Naive thymus-derived CD8-positive, alpha-beta T cell (primary cell): ENCODE measurements at regions of chr14 and their contacts with region 1.

Region 1: GRCh38 chr14:24108336-24108874 is 6.2 kb upstream of the DCAF11 start:
- DNase-seq: no peak
- ATAC-seq: peak; percentile 31 to 32
- H3K4me3 Mint-ChIP-seq: peak overlapping the region in 8 of 10 donors; percentile 2 to 57 (median 32)
- H3K27ac Mint-ChIP-seq: peak overlapping the region; percentile 83 to 98 (median 94)
- H3K4me1 Mint-ChIP-seq: peaks cover 5 to 24% (median 11%) of the 10 kb centered on the region in 4 donors
- H3K27me3 Mint-ChIP-seq: no peaks in the 10 kb centered on the region

Region 2: DNA sequence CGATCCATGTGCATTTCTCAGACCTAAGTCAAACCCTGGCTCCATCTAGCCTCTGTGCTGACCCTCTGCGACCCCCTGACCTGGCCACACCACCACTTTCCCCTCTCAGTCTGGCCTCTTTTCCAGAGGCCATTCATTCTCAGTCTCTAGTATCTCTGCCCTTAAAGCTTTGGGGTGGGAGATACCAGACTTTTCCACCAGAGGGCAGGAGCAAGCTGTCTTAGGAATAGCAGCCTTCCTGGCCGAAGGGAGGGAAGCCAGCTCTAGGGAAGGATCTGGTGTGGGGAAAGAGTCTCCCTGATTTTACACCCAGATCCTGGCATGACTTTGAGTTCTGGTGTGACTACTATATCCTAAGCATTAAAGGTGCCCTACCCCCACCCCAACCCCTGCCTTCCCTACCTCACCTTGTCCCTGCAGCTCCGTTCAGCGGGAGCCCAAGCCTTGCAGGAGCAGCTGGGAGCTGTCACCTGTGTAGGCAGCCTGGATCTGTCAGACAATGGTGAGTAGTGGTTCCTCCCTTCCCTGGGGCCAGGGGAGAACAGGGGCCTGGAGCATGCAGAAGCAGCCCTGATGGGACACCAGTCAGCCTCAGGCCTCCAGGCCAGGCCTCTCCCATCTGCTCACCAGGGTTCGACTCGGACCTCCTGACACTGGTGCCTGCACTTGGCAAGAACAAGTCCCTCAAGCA is 50.0 kb before region 1 on chr14:
- POLR2A ChIA-PET with region 1: interaction called, 14 read pairs
- DNase-seq: peak in 8 of 10 donors; percentile 27 to 76 (median 56)
- ATAC-seq: peak; percentile 74 to 79
- H3K4me3 Mint-ChIP-seq: no peak overlapping the region
- H3K27ac Mint-ChIP-seq: peak overlapping the region in 2 of 10 donors; percentile 37 to 74
- H3K4me1 Mint-ChIP-seq: peaks cover under 1 to 10% (median 6%) of the 10 kb centered on the region in 4 donors
- H3K27me3 Mint-ChIP-seq: peaks cover under 1 to 22% (median 6%) of the 10 kb centered on the region in 5 donors

Region 3: DNA sequence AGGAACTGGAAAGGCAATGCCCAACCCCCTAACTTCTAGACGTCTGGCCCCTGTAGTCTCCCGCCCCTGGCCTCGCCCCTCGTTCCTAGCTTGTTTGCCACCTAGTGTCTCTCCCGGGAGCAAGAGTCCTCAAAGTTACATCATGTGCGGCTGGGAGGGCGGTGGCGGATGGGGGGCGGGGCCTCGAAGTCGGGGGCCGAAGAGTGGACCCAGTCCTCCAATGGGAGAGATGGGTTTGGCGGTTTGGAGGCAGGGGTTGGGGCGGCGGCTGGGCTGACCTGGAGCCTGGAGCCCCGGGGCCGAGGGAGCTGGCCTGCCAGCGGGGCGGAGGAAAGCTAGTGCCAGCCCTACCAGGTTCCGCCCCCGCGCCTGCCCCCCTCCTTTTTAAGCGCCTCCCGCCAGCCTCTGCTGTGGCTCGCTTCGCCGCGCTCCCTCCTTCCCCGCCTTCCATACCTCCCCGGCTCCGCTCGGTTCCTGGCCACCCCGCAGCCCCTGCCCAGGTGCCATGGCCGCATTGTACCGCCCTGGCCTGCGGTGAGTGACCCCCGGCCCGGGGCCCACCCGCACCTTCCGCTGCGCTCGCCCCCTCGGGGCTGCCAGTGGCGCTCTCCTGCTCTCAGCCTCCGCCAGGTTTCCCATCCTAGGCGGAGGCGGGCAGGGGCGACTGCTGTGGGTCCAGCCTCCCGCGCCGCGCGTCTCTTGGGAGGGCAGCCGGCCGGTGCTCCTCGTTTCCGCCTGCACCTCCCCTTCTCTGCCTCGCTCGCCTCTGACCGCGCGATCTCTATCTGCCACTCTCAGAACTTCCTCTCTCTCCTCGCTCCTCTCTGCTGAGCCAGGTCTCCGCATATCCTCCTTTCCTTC is 14.3 kb before region 1 on chr14 and contains the start of gene PCK2:
- POLR2A ChIA-PET with region 1: interaction called, 44 read pairs
- DNase-seq: peak; percentile 40 to 78 (median 62)
- ATAC-seq: peak; percentile 78 to 83
- H3K4me3 Mint-ChIP-seq: peak within 1 kb of the TSS; percentile 95 to 99 (median 98)
- H3K27ac Mint-ChIP-seq: peak within 1 kb of the TSS; percentile 93 to 99 (median 97)
- H3K4me1 Mint-ChIP-seq: peaks cover 29 to 40% (median 34%) of the 10 kb centered on the region in 4 donors
- H3K27me3 Mint-ChIP-seq: no peaks in the 10 kb centered on the region
- polyA plus RNA-seq, gene PCK2: 8.6 to 11.6 (median 11.3) TPM

Region 4: DNA sequence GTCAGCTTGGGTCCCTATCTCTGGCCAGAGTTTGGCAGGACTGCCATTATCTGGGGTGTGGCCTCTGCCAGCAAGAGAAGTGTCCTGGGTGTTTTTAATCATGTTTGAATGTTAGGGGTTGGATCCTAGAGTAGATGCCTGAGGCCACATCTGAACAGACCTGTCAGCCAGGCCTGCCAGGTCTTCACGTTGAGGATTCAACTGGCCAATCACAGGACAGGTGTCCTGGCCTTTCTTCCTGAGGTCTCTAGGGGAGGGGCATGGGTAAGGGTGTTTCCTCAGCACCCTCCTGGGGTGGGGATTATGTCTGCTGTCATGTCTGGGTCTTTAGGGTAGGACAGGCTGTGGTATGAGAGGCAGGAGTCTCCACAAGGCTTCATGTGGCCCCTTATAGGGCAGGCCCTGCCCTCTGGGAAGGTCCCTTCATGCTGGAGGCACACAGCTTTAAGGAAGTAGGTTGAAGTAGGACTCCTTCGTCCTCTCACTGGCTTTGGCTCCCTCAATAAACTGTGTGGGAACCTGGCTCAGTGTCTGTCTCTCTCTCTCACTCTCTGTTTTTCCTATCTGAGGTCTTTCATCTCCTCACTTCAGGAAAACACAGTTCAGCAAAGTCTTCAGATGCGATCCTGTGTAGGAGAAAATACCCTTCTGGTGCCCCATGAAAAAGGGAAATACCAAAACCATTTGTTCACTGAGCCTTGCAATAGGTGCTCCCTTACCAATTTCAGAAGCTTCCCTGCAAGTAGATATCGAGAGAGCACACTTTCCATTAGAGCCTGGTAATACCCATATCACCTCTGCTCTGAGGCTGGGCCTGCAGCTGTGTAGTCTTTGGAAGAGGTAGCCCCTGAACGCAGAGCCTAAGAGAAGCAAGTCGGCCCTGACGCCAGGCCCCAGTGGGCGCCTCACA is 15.4 kb after region 1 on chr14:
- POLR2A ChIA-PET with region 1: no interaction called
- DNase-seq: no peak
- ATAC-seq: no peak
- H3K4me3 Mint-ChIP-seq: no peak overlapping the region
- H3K27ac Mint-ChIP-seq: peak overlapping the region in 4 of 10 donors; percentile 19 to 71 (median 44)
- H3K4me1 Mint-ChIP-seq: peaks cover 1 to 15% (median 3%) of the 10 kb centered on the region in 4 donors
- H3K27me3 Mint-ChIP-seq: no peaks in the 10 kb centered on the region

Region 5: DNA sequence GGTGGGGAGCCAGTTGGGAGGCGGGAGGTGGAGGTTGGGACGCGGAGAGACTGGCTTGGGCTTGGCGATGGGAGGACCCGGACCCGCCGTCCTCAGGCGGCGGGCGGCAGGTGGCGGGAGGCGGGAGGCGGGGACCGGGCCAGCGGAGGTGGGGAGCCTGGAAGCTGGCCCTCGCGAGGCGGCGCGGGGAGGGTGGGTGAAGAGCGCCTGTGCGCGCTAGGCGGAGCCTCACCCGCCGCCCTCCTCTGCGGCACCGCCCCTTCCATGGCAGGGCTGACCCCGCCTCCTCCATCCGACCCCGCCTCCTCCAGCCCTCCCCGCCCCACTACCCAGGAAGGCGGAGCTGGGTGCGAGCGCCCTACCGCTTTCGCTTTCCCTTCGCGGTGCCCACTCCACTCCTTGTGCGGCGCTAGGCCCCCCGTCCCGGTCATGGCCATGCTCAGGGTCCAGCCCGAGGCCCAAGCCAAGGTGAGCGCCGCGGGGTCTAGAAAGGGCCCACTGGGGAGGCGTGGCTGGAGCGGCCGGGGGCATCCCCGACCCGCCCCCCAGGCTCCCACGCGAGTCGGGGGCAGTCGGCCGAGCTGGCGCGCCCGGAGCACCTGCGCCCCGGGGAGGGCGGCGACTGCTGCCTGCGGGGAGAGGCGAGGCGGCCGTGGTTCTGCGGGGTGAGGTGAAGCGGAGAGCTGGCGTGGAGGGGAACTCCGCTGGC is 27.6 kb after region 1 on chr14 and contains the start of gene PSME1:
- POLR2A ChIA-PET with region 1: interaction called, 177 read pairs
- DNase-seq: peak; percentile 88 to 96 (median 94)
- ATAC-seq: peak; percentile 88 to 94
- H3K4me3 Mint-ChIP-seq: peak within 1 kb of the TSS; percentile 87 to 98 (median 93)
- H3K27ac Mint-ChIP-seq: peak within 1 kb of the TSS; percentile 86 to 97 (median 94)
- H3K4me1 Mint-ChIP-seq: peaks cover 34 to 69% (median 66%) of the 10 kb centered on the region in 4 donors
- H3K27me3 Mint-ChIP-seq: no peaks in the 10 kb centered on the region
- polyA plus RNA-seq, gene PSME1: 681 to 767 (median 753) TPM

Region 6: DNA sequence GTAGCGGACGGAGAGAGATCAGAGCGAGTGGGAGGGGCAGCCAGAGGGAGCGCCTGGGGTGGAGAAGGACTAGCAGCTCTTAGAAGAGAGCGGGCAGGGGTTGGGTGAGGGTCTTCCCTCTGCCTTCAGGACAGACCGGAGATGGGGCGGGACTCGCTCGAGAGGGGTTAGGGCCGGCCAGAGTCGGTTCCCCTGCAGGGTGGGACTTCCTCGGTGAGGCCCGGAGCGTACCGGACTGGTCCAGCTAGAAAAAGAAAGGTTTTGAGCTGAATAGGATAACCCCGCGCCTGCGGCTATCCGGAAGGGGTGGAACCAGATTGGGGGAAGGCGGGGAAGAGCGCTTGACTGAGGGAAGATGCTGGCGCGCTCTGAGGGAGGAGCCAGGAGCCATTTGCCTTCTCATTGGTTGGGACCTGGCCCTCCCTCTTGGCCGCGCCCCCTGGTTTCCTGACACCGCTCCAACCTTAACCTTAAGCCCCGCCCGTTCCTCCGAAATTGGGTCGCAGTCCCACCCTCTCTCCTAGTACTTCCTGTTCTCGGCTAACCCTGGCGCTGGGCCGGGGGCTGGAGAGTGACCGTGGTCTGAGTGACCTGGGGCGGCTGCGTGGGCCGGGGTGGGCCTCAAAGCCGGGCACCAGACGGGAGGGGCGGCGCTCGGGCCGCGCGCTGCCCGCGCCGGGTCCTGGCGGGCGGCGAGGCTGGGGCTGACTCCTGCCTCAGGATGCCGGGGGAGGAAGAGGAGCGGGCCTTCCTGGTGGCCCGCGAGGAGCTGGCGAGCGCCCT is 38.8 kb after region 1 on chr14 and contains the start of gene RNF31:
- POLR2A ChIA-PET with region 1: interaction called, 84 read pairs
- DNase-seq: peak; percentile 91 to 98 (median 96)
- ATAC-seq: peak; percentile 87 to 90
- H3K4me3 Mint-ChIP-seq: peak within 1 kb of the TSS; percentile 94 to 100 (median 98)
- H3K27ac Mint-ChIP-seq: peak within 1 kb of the TSS; percentile 91 to 99 (median 96)
- H3K4me1 Mint-ChIP-seq: peaks cover 22 to 71% (median 69%) of the 10 kb centered on the region in 4 donors
- H3K27me3 Mint-ChIP-seq: no peaks in the 10 kb centered on the region
- polyA plus RNA-seq, gene RNF31: 34.1 to 45.3 (median 37.6) TPM

Region 7: GRCh38 chr14:24207104-24207551 is 98.7 kb after region 1 on chr14:
- POLR2A ChIA-PET with region 1: no interaction called
- DNase-seq: no peak
- ATAC-seq: no peak
- H3K4me3 Mint-ChIP-seq: no peak overlapping the region
- H3K27ac Mint-ChIP-seq: peak overlapping the region in 9 of 10 donors; percentile 22 to 91 (median 79)
- H3K4me1 Mint-ChIP-seq: peaks cover 32 to 68% (median 62%) of the 10 kb centered on the region in 4 donors
- H3K27me3 Mint-ChIP-seq: no peaks in the 10 kb centered on the region